Heart right ventricle (tissue), 16 donors: ENCODE measurements at regions of chr6 and their contacts with region 1.

Region 1: GRCh38 chr6:84428300-84428907 is 201.0 kb upstream of the CEP162 start:
- DNase-seq: peak in 1 of 2 donors; percentile 37
- ATAC-seq: peak in 2 of 8 donors; percentile 30 to 57
- H3K4me3 ChIP-seq: no peak overlapping the region
- H3K27ac ChIP-seq: no peak overlapping the region
- H3K4me1 ChIP-seq: no peaks in the 10 kb centered on the region
- H3K27me3 ChIP-seq: peaks cover 0 to 4% (median 0%) of the 10 kb centered on the region in 7 donors
- CTCF ChIP-seq: peak; percentile 8 to 67 (median 57)

Region 2: DNA sequence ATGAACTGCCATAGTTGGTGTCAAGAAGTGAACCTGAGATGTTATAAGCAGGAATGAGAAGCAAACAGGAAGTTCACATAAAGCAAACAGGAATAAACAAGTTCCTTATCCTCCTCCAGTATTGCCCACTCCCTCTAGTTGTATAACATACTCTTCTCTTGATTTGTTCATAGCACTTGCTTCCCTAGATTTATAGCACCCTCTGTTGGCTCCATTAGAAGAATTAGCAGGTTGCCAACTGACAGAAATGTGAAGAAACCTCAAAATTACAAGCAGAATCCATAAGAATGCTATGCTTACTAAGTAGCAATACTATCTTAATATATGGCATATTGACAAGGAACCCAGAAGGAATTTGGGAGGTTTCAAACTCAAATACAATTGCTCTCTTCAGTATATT is 140.6 kb after region 1 on chr6:
- intact Hi-C with region 1: loop called in 1 of 10 experiments (anchors 10 kb)
- DNase-seq: no peak
- ATAC-seq: no peak
- H3K4me3 ChIP-seq: no peak overlapping the region
- H3K27ac ChIP-seq: no peak overlapping the region
- H3K4me1 ChIP-seq: no peaks in the 10 kb centered on the region
- H3K27me3 ChIP-seq: no peaks in the 10 kb centered on the region
- CTCF ChIP-seq: peak in 3 of 9 donors; percentile 6 to 16 (median 15)

Region 3: DNA sequence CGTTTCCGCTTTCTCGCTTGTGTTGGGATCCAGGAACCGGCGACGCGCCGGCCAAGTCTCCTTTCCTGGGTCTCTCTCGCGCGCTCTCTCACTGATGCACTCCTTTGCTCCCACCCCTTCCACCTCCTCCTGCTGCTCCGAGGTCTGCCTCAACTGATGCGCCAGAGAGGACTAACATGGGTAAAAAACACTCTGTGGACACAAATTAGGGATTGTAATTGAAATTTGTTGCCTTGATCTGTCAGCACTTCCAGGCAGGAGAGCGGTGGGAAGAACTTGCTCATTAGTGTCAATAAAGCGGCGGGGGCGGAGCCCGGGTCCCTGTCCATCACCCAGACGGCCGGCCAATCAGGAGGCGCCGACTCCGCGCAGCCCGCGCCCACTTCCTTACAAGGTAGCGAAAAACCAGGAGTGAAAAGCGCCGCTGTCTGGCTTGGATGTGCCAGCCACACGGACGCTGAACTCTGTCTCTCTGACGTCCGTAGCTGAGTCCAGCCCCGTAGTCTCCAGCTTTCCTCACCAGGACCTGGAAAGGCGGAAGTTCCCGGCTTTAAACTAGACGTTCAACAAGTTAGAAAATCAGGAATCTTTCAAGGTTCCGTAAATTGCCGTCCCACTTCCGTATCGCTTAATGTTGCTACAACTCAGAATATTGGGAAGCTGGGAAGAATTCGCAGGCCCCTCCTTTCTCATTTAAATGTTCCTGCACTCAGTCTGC is 336.1 kb after region 1 on chr6 and contains the start of gene TBX18:
- intact Hi-C with region 1: loop called in 4 of 10 experiments (anchors 5 to 10 kb)
- DNase-seq: peak; percentile 87 to 88
- ATAC-seq: peak; percentile 88 to 95 (median 92)
- H3K4me3 ChIP-seq: peak within 1 kb of the TSS; percentile 48 to 66 (median 58)
- H3K27ac ChIP-seq: peak within 1 kb of the TSS; percentile 56 to 89 (median 86)
- H3K4me1 ChIP-seq: peaks cover 0 to 15% (median 5%) of the 10 kb centered on the region in 9 donors
- H3K27me3 ChIP-seq: peaks cover 9 to 100% (median 95%) of the 10 kb centered on the region in 7 donors
- CTCF ChIP-seq: no peak
- total RNA-seq, gene TBX18: 1.7 to 9.1 (median 2.8) TPM

Region 4: DNA sequence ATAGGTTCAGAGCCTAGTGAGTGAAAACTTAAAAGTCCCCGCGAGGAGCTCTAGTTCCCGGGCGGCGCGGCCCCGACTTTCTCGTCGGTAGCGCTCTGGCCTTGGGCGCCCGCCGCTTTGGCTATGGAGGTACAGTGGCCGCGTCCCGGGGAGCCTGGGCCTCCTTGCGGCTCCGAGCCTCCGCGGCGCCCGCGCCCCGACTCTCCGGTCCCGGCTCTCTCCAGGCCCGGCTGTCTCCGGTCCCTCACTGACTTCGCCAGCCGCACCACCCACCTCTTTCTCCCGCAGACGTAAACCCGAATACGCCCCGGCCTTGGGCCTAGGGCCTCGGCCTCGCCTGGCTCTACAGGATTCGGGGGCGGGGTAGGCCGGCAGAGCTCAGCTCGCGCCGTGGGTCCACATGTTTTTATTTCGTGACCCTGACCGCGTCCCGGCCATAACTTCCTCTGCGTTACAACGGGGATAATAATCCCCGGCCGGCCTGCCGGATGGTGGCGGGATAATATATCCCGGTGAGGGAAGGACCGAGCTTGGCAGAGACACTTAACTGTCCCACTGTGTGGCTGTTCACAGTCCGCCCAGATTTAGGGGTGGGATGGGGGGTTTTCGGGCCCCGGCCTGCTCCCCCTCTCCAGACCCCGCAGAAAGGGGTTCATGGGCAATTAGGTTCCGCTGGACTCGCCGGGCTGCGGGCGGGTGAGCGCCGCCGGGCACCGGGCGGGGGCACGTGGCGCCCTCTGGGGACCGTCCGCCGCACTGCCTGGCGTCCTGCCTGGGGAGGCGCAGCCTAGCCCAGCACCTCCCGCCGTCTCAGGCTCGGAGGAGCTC is 346.0 kb after region 1 on chr6:
- intact Hi-C with region 1: loop called in 4 of 10 experiments (anchors 10 kb)
- DNase-seq: peak; percentile 15 to 58
- ATAC-seq: peak; percentile 70 to 91 (median 76)
- H3K4me3 ChIP-seq: peak overlapping the region; percentile 7 to 61 (median 52)
- H3K27ac ChIP-seq: peak overlapping the region in 9 of 10 donors; percentile 38 to 86 (median 73)
- H3K4me1 ChIP-seq: peaks cover 0 to 19% (median 15%) of the 10 kb centered on the region in 9 donors
- H3K27me3 ChIP-seq: peaks cover 0 to 96% (median 81%) of the 10 kb centered on the region in 7 donors
- CTCF ChIP-seq: peak; percentile 11 to 62 (median 52)

Region 5: GRCh38 chr6:85015396-85015990 is 587.1 kb after region 1 on chr6:
- intact Hi-C with region 1: loop called in 1 of 10 experiments (anchors 10 kb)
- DNase-seq: peak; percentile 31 to 38
- ATAC-seq: peak in 6 of 8 donors; percentile 55 to 83 (median 66)
- H3K4me3 ChIP-seq: no peak overlapping the region
- H3K27ac ChIP-seq: no peak overlapping the region
- H3K4me1 ChIP-seq: peaks cover 0 to 6% (median 0%) of the 10 kb centered on the region in 9 donors
- H3K27me3 ChIP-seq: peaks cover 0 to 3% (median 0%) of the 10 kb centered on the region in 7 donors
- CTCF ChIP-seq: peak; percentile 24 to 69 (median 54)

Region 6: DNA sequence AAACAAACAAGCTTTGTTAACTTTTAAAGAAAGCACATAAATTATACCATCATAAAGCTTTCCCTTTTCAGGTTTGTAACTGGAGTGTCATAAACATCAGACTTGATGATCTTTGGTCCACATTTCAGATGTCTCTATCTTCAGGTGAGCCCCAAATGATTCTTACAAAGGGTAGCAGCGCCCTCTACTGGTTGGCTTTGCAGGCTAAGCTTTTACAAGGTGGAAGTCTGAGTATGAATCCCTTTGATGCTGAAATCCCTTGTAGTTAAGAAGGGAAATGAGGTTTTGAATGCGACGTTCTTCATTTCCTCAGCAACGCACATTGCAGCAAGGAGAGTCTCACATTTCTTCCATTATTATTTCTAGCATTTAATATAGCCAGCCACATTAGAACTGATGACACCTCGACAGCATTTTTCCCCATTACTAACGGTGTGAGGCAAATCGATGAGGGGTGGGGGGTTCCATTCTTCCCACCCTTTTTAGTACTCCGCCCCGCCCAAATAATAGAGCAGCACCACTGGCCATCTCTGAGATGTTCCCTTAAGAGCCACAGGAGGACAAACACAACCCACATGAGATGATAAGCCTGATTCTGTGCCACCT is 895.1 kb after region 1 on chr6:
- intact Hi-C with region 1: loop called in 2 of 10 experiments (anchors 10 kb)
- DNase-seq: peak; percentile 24 to 49
- ATAC-seq: peak in 3 of 8 donors; percentile 51 to 64 (median 54)
- H3K4me3 ChIP-seq: no peak overlapping the region
- H3K27ac ChIP-seq: no peak overlapping the region
- H3K4me1 ChIP-seq: no peaks in the 10 kb centered on the region
- H3K27me3 ChIP-seq: peaks cover 0 to 18% (median 0%) of the 10 kb centered on the region in 7 donors
- CTCF ChIP-seq: peak; percentile 15 to 83 (median 76)